ENCODE measurements at regions of chr10 and their contacts with region 1.

Region 1: DNA sequence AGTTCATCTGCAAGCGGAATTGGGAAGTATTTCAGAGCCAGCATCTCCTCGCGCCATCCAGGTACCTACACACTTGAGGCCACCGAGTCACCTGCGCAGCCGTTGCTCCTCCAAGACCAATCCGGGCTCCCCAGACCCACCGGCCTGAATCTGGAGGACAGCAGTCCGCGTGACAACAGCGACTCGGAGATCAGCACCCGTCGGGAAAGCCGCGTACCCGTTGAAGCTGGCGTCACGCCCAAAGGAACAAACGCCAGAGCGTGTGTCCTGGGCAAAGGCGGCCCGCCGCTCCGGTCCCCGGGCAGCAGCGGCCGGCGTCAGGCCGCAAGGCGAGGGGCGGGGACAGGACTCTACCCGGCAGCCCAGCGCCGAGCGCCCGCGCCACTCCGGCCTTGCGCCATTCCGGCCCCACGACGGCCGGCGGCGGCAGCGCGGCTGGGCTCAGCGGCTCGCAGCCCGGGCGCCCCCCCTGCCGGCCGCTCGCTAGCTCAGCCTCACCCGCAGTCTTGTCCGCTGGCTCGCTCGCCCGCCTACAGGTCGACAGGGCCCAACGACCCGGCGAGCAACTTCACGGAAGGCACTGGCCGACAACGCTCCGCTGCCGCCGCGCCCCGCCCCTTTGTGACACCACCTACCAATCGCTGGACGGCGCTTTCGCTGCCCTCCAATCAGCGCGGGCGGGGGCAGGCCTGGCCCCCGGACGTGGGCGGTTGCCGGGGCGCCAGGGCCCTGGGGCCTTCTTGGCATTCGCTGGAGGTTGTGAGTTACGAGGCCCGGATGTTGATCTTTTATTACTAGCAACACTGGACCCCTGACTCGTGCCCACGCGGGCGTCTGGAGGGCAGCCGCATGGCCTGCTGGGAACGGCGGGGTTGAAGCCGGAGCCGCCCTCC is at the start of gene ZFAND4:
- DNase-seq: peak; percentile 97
- ATAC-seq: peak; percentile 97
- H3K4me3 Mint-ChIP-seq: peak within 1 kb of the TSS; percentile 82
- H3K27ac Mint-ChIP-seq: peak within 1 kb of the TSS; percentile 85
- H3K4me1 Mint-ChIP-seq: peaks cover 41% of the 10 kb centered on the region
- H3K27me3 Mint-ChIP-seq: no peaks in the 10 kb centered on the region
- total RNA-seq, gene ZFAND4: 11.5 to 11.9 TPM

Region 2: GRCh38 chr10:45000752-45001380 is 671.6 kb before region 1 on chr10 and contains the start of gene ZNF22:
- CTCF ChIA-PET with region 1: no interaction called
- POLR2A ChIA-PET with region 1: no interaction called
- intact Hi-C with region 1: loop called in 1 of 2 experiments (anchors 1 kb)
- DNase-seq: peak; percentile 78
- ATAC-seq: peak; percentile 74
- H3K4me3 Mint-ChIP-seq: peak within 1 kb of the TSS; percentile 84
- H3K27ac Mint-ChIP-seq: peak within 1 kb of the TSS; percentile 89
- H3K4me1 Mint-ChIP-seq: peaks cover 24% of the 10 kb centered on the region
- H3K27me3 Mint-ChIP-seq: no peaks in the 10 kb centered on the region
- total RNA-seq, gene ZNF22: 18.8 to 21.6 TPM

Region 3: DNA sequence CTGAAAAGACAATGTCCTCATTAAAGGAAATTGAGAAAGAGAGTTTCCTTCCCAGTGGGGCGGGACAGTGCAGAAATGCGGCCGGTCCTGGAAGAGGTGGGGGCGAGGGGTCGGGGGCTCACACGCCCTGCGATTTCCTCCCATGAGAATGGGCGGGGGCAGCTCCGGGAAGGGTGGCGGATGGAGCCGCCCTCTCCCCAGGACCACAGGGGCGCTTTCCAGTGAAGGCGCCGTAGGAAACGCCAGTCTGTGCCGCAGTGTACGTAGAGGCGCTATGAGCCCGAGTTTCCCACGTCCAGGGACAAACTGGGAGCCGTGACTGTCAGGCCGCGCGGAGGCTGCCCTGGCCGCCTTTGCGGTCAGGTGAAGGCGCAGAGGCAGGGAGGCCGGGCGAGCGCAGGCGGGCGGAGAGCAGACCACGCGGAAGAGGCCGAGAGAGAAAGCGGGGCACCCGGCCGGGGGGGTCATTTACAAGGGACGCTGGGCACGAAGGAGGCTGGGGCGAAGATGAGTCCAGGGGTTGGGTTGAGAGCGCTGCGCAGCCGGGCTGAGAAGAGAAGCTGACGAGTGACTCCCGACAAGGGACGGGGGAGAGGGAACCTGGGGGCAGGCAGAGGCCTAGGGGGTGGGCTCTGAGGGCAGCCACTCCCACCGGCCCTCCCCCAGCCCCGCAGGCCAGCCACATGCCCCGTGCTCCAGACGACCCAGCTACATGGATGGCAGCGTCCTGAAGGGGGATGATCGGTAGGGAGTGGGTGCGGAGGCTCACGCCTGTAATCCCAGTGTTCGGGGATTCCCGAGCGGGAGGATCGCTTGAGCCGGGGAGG is 253.4 kb before region 1 on chr10:
- CTCF ChIA-PET with region 1: no interaction called
- POLR2A ChIA-PET with region 1: no interaction called
- intact Hi-C with region 1: loop called in 1 of 2 experiments (anchors 5 kb)
- DNase-seq: peak; percentile 61
- ATAC-seq: peak; percentile 72
- H3K4me3 Mint-ChIP-seq: peak overlapping the region; percentile 81
- H3K27ac Mint-ChIP-seq: peak overlapping the region; percentile 86
- H3K4me1 Mint-ChIP-seq: peaks cover 35% of the 10 kb centered on the region
- H3K27me3 Mint-ChIP-seq: peaks cover 5% of the 10 kb centered on the region

Region 4: GRCh38 chr10:45470098-45471012 is 202.1 kb before region 1 on chr10:
- CTCF ChIA-PET with region 1: interaction called, 10 read pairs
- POLR2A ChIA-PET with region 1: interaction called, 3 read pairs
- intact Hi-C with region 1: loop called (anchors 1 to 2 kb)
- DNase-seq: peak; percentile 69
- ATAC-seq: peak; percentile 86
- H3K4me3 Mint-ChIP-seq: no peak overlapping the region
- H3K27ac Mint-ChIP-seq: peak overlapping the region; percentile 90
- H3K4me1 Mint-ChIP-seq: peaks cover 16% of the 10 kb centered on the region
- H3K27me3 Mint-ChIP-seq: no peaks in the 10 kb centered on the region

Region 5: DNA sequence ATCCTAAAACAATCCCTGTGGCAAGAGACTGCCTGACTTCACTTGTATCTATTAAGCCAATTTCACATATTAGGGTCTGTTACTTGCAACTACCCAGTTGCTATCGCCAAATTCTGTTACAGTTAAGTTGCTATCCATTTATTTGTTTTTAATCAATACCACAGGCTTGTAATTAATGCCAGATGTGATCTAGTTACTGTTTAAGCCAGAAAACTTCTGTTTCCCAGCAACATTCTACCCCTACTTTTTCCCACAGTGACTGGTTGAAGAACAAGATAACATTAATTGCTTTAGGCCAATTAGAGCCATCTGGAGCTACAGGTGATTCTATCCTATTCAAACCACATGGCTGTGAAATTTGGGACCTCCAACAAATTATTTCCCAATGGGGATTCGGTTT is 167.1 kb before region 1 on chr10:
- CTCF ChIA-PET with region 1: no interaction called
- POLR2A ChIA-PET with region 1: no interaction called
- intact Hi-C with region 1: no loop called
- DNase-seq: no peak
- ATAC-seq: no peak
- H3K4me3 Mint-ChIP-seq: no peak overlapping the region
- H3K27ac Mint-ChIP-seq: no peak overlapping the region
- H3K4me1 Mint-ChIP-seq: peaks cover 2% of the 10 kb centered on the region
- H3K27me3 Mint-ChIP-seq: no peaks in the 10 kb centered on the region

Region 6: GRCh38 chr10:45594276-45595106 is 77.9 kb before region 1 on chr10:
- CTCF ChIA-PET with region 1: no interaction called
- POLR2A ChIA-PET with region 1: no interaction called
- intact Hi-C with region 1: loop called in 1 of 2 experiments (anchors 1 kb)
- DNase-seq: peak; percentile 94
- ATAC-seq: peak; percentile 93
- H3K4me3 Mint-ChIP-seq: peak overlapping the region; percentile 77
- H3K27ac Mint-ChIP-seq: peak overlapping the region; percentile 67
- H3K4me1 Mint-ChIP-seq: peaks cover 30% of the 10 kb centered on the region
- H3K27me3 Mint-ChIP-seq: peaks cover 5% of the 10 kb centered on the region

Region 7: GRCh38 chr10:46092524-46093081 is 420.2 kb after region 1 on chr10:
- CTCF ChIA-PET with region 1: no interaction called
- POLR2A ChIA-PET with region 1: no interaction called
- intact Hi-C with region 1: no loop called
- DNase-seq: peak; percentile 25
- ATAC-seq: peak; percentile 13
- H3K4me3 Mint-ChIP-seq: no peak overlapping the region
- H3K27ac Mint-ChIP-seq: no peak overlapping the region
- H3K4me1 Mint-ChIP-seq: no peaks in the 10 kb centered on the region
- H3K27me3 Mint-ChIP-seq: no peaks in the 10 kb centered on the region

Region 8: GRCh38 chr10:46268076-46268881 is 595.9 kb after region 1 on chr10:
- CTCF ChIA-PET with region 1: no interaction called
- POLR2A ChIA-PET with region 1: no interaction called
- intact Hi-C with region 1: loop called in 1 of 2 experiments (anchors 5 kb)
- DNase-seq: peak; percentile 87
- ATAC-seq: peak; percentile 80
- H3K4me3 Mint-ChIP-seq: no peak overlapping the region
- H3K27ac Mint-ChIP-seq: no peak overlapping the region
- H3K4me1 Mint-ChIP-seq: peaks cover 25% of the 10 kb centered on the region
- H3K27me3 Mint-ChIP-seq: no peaks in the 10 kb centered on the region